PC-3 (cell line): ENCODE measurements at regions of chr6 and their contacts with region 1.

Region 1: DNA sequence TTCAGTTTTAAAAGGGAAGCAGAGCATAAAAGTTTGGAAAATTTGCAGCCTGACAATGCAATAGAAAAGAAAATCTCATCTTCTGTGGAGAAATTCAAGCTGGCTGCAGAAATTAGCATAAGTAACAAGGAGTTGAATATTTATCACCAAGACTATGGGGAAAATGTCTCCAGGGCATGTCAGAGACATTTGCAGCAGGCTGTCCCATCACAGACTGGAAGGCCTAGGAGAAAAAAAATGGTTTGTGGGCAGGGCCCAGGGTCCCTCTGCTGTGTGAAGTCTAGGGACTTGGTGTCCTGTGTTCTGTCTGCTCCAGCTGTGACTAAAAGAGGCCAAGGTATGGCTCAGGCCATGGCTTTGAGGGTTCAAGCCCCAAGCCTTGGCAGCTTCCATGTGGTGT is 8.1 kb upstream of the LAMA2 start:
- DNase-seq: no peak
- ATAC-seq: no peak
- H3K4me3 ChIP-seq: no peak overlapping the region
- H3K27ac ChIP-seq: no peak overlapping the region
- H3K4me1 ChIP-seq: no peaks in the 10 kb centered on the region
- H3K27me3 ChIP-seq: no peaks in the 10 kb centered on the region
- CTCF ChIP-seq: no peak

Region 2: DNA sequence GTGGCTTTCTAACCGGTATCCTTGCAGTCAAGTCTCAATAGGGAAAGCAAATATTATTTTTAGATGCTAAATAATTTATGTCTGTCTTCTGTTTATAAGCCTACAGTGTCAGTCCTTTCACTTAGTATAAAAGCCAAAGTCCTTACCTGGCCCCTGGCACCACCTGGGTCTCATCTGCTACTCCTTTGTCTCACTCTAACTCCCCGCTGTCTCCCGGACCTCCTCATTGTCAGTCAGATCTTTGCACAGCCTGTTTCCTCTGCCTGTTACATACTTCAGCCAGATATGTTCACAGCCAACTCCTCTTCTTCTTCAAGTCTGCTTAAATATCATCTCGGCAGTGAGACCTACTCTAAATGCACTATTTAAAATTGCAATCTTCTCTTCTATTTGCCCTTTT is 1058.2 kb before region 1 on chr6:
- CTCF ChIA-PET with region 1: no interaction called
- POLR2A ChIA-PET with region 1: interaction called, 10 read pairs
- intact Hi-C with region 1: no loop called
- DNase-seq: no peak
- ATAC-seq: no peak
- H3K4me3 ChIP-seq: no peak overlapping the region
- H3K27ac ChIP-seq: no peak overlapping the region
- H3K4me1 ChIP-seq: no peaks in the 10 kb centered on the region
- H3K27me3 ChIP-seq: peaks cover 22% of the 10 kb centered on the region
- CTCF ChIP-seq: no peak